Astrocyte of the cerebellum (primary cell): ENCODE measurements at regions of chr1 and their contacts with region 1.

Region 1: GRCh38 chr1:58075188-58075578 is 471.3 kb downstream of the OMA1 start:
- DNase-seq: no peak
- H3K4me3 ChIP-seq: no peak overlapping the region
- CTCF ChIP-seq: no peak

Region 2: GRCh38 chr1:58136387-58136786 is 61.2 kb after region 1 on chr1:
- in situ Hi-C with region 1: loop called (anchors 5 kb)
- DNase-seq: no peak
- H3K4me3 ChIP-seq: no peak overlapping the region
- CTCF ChIP-seq: no peak